Activated naive CD4-positive, alpha-beta T cell treated with anti-CD3 and anti-CD28 coated beads for 36 hours (primary cell): ENCODE measurements at regions of chr18 and their contacts with region 1.

Region 1: DNA sequence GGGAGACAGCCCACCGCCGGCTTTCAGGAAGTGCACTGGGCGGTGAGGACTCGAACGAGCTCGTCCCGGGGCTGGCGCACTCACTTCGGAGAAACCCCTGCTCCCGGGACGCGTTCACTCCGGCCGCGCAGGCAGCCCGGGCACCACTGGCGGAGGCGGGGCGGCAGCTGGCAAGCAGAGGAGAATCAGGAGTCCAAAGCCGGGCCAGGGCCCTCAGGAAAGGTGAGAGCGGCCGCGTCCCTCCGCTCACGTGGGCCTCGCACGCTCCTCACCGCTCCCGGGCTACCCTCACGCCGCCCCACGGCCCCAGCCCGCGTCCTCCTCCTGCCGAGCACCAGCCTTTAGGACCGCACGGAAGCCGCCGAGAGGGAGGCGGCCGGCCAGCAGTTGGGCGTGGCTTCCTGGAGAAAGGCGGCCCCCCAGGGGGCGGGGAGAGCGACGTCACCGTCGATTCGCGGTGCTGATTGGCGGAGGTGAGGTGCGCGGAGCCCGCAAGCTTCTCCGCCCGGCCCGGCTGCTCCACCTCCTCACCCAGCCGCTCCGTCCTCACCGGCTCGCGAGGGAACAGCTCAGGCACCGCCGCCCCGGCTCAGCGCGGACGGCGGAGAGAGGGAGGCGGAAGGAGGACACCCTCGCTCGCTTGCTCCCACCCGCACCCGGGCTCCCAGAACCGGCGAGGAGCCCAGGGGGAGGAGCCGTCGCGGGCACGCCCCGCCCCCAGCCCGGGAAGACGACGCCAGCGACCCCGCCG is at the start of gene ZCCHC2:
- DNase-seq: peak; percentile 98
- H3K4me3 Mint-ChIP-seq: peak within 1 kb of the TSS; percentile 92
- H3K27ac Mint-ChIP-seq: peak within 1 kb of the TSS; percentile 98
- H3K4me1 Mint-ChIP-seq: peaks cover 14% of the 10 kb centered on the region
- H3K27me3 Mint-ChIP-seq: no peaks in the 10 kb centered on the region
- total RNA-seq, gene ZCCHC2: 22.1 to 23.3 TPM

Region 2: DNA sequence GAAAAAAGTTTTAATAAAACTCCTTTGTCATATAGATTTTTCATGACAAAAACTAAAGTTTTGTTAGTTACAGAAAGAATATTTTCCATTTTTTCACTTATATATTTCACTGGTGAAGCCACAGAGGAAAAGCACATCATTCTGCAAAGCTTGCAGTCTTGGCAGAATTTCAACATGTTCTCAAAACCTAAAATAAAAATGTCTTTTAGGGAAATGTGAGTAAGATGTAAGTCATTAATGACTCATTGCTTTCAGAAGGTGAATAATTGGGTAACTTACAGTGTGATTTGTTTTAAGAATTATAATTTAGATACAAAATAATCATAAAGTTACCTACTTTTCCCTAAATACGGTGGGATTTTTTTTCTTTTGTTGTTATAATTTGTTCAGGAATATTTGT is 241.0 kb before region 1 on chr18:
- CTCF ChIA-PET with region 1: no interaction called
- intact Hi-C with region 1: loop called (anchors 5 kb)
- DNase-seq: no peak
- H3K4me3 Mint-ChIP-seq: no peak overlapping the region
- H3K27ac Mint-ChIP-seq: no peak overlapping the region
- H3K4me1 Mint-ChIP-seq: peaks cover 39% of the 10 kb centered on the region
- H3K27me3 Mint-ChIP-seq: no peaks in the 10 kb centered on the region

Region 3: DNA sequence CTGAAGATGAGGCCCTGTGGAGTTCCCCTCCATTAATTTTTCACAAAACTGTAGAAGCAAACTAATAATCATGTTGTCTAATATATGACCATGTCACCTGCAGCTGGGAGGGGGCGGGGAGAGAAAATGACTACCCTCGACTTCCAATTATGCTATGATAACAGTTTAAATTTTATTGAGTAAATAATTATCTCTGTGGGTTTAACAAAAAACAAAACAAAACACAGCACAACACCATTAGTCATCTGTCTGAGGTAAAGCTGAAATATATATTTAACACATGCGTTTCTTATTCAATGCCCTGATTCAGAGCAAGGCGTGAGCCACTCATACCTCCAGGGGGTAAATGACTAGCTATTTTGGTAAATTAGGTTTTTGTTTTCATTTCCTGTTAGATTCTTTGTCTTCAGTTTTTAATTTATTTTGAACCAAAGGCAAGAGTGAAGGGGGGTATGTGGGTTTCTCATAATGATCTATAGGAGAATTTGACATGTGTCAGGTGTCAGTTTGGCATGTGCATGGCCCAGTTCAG is 77.2 kb before region 1 on chr18:
- CTCF ChIA-PET with region 1: no interaction called
- intact Hi-C with region 1: loop called (anchors 5 kb)
- DNase-seq: peak; percentile 18
- H3K4me3 Mint-ChIP-seq: no peak overlapping the region
- H3K27ac Mint-ChIP-seq: no peak overlapping the region
- H3K4me1 Mint-ChIP-seq: no peaks in the 10 kb centered on the region
- H3K27me3 Mint-ChIP-seq: no peaks in the 10 kb centered on the region

Region 4: DNA sequence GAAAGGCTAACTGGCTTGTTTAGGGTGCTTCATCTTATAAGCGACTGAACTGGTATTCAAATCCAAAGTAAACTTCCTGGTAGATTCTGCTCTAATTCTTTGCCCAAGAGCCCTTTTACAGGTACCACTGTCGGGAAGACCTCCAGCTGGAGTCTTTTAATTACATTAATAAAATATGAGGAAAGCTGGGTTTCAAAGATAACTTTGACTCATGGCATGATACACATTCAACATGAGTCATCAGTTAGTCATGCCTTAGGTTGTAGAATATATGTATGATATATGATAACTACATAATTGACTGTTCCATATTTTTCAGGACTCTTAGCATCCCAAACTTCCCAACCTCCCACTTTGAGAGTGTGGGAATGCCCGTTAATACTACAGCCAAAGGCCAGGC is 32.5 kb after region 1 on chr18:
- CTCF ChIA-PET with region 1: no interaction called
- intact Hi-C with region 1: loop called (anchors 2 kb)
- DNase-seq: no peak
- H3K4me3 Mint-ChIP-seq: no peak overlapping the region
- H3K27ac Mint-ChIP-seq: no peak overlapping the region
- H3K4me1 Mint-ChIP-seq: peaks cover 24% of the 10 kb centered on the region
- H3K27me3 Mint-ChIP-seq: no peaks in the 10 kb centered on the region

Region 5: GRCh38 chr18:63155169-63155852 is 632.6 kb after region 1 on chr18:
- CTCF ChIA-PET with region 1: no interaction called
- intact Hi-C with region 1: loop called (anchors 2 kb)
- DNase-seq: peak; percentile 93
- H3K4me3 Mint-ChIP-seq: peak overlapping the region; percentile 79
- H3K27ac Mint-ChIP-seq: peak overlapping the region; percentile 99
- H3K4me1 Mint-ChIP-seq: peaks cover 97% of the 10 kb centered on the region
- H3K27me3 Mint-ChIP-seq: no peaks in the 10 kb centered on the region

Region 6: DNA sequence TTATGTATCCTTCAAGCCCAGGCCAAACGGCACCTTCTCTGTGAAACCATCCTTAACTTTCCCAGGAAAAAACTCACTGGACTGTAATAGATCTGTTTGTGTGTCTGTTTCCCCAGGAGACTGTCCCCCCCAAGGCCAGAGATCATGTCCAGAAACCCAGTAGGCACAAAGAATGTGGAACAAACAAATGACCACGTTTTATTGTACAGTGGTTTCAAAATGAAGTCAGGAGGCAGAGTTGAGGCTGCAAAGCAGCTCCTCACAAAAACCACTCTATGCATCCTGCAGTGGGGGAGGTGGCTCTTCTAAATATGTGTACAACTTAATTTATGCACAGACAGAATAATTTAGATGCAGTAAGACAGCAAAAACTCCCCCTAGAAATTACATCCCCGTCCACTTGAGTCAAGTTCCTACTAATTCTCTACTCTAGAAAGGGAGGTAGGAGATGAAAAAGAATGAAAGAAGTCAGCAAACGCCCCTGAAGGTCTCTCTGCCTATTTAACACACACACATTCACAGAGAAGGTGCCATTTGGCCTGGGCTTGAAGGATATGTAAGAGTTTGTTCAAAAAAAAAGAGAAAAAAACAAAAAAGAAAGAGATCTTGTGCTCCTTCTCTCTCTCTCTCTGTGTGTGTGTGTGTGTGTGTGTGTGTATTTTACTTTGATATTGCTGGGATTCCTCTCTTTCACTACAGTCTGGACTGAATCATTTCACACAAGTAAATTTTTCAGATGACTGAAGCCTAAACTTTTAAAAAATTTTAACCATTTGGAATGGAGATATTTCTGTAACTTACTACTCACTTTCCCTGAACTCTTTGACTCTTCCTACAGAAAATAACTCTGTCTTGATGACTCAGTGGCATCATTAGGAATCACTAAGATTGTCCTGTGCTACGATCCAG is 777.4 kb after region 1 on chr18:
- CTCF ChIA-PET with region 1: no interaction called
- intact Hi-C with region 1: loop called (anchors 5 kb)
- DNase-seq: peak; percentile 72
- H3K4me3 Mint-ChIP-seq: peak overlapping the region; percentile 17
- H3K27ac Mint-ChIP-seq: peak overlapping the region; percentile 86
- H3K4me1 Mint-ChIP-seq: peaks cover 73% of the 10 kb centered on the region
- H3K27me3 Mint-ChIP-seq: no peaks in the 10 kb centered on the region